A673 (cell line): ENCODE measurements at regions of chr5 and their contacts with region 1.

Region 1: GRCh38 chr5:132369474-132370180 is at the start of gene SLC22A5:
- DNase-seq: peak; percentile 50
- H3K4me3 ChIP-seq: peak within 1 kb of the TSS; percentile 82
- H3K27ac ChIP-seq: peak within 1 kb of the TSS; percentile 75
- H3K4me1 ChIP-seq: peaks cover 10% of the 10 kb centered on the region
- H3K27me3 ChIP-seq: no peaks in the 10 kb centered on the region
- CTCF ChIP-seq: no peak
- total RNA-seq, gene SLC22A5: 3.0 and 3.8 TPM in 2 replicates

Region 2: GRCh38 chr5:132272311-132273210 is 97.1 kb before region 1 on chr5:
- CTCF ChIA-PET with region 1: interaction called, 3 read pairs
- POLR2A ChIA-PET with region 1: no interaction called
- intact Hi-C with region 1: loop called (anchors 5 kb)
- DNase-seq: peak; percentile 83
- H3K4me3 ChIP-seq: no peak overlapping the region
- H3K27ac ChIP-seq: no peak overlapping the region
- H3K4me1 ChIP-seq: no peaks in the 10 kb centered on the region
- H3K27me3 ChIP-seq: no peaks in the 10 kb centered on the region
- CTCF ChIP-seq: peak; percentile 87

Region 3: DNA sequence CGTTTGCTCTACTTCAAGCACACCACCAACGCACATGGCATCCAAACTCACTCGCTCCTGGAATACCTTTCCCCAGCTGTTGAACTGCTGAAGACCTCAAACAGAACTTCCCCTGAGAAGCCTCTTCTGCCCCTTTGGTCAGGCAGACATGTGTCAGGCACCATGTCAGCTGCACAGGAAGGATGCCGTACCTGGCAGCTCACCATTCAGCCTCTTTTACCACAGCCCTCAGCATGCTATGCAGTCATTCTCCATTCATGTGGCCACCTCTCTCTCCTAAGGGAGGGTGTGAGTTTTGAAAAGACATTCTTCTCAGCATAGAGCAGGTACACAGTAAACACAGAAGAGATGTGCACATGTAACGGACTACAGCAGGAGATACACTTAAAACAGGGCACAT is 318.4 kb after region 1 on chr5:
- CTCF ChIA-PET with region 1: no interaction called
- POLR2A ChIA-PET with region 1: interaction called, 11 read pairs
- intact Hi-C with region 1: no loop called
- DNase-seq: no peak
- H3K4me3 ChIP-seq: no peak overlapping the region
- H3K27ac ChIP-seq: no peak overlapping the region
- H3K4me1 ChIP-seq: no peaks in the 10 kb centered on the region
- H3K27me3 ChIP-seq: no peaks in the 10 kb centered on the region
- CTCF ChIP-seq: no peak